Tibial artery (tissue), 4 donors: ENCODE measurements at regions of chr17 and their contacts with region 1.

Region 1: DNA sequence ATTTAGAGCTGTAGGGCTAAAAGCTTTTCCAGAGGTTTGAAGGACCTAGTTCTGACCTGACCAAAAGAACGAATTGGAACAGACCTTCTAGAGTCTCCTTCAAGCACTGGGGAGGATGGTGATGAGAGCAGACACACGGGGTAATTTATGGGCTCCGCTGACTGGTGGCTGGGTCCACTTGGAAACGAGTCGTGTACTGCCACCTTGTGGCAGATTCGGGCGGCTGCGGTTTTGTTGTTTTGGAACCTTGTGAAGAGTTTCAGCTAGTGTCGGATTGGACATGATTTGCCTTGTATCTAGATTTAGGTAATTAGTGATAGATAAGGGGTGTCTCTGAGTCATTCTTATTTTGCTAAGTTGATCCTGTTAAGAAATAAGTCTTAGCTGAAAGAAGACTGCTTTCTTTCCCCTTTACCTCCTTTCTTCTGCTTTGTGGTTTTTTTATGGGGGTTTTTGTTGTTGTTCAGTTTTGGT is 98.9 kb downstream of the AATF start:
- DNase-seq: peak; percentile 58 to 81
- H3K4me3 ChIP-seq: no peak overlapping the region
- H3K27ac ChIP-seq: no peak overlapping the region
- H3K4me1 ChIP-seq: peaks cover 0 to 4% (median 0%) of the 10 kb centered on the region in 4 donors
- H3K27me3 ChIP-seq: no peaks in the 10 kb centered on the region
- CTCF ChIP-seq: peak; percentile 74 to 80

Region 2: GRCh38 chr17:36629252-36629847 is 418.3 kb before region 1 on chr17:
- intact Hi-C with region 1: loop called (anchors 5 kb)
- DNase-seq: peak; percentile 63 to 79
- H3K4me3 ChIP-seq: no peak overlapping the region
- H3K27ac ChIP-seq: no peak overlapping the region
- H3K4me1 ChIP-seq: no peaks in the 10 kb centered on the region
- H3K27me3 ChIP-seq: peaks cover 0 to 37% of the 10 kb centered on the region in 2 donors
- CTCF ChIP-seq: peak; percentile 94 to 96